ENCODE measurements at regions of chr16 and their contacts with region 1.

Region 1: GRCh38 chr16:89602273-89602951 is 11.0 kb upstream of the DPEP1 start:
- DNase-seq: peak; percentile 93
- H3K27ac ChIP-seq: peak overlapping the region; percentile 84
- CTCF ChIP-seq: no peak

Region 2: DNA sequence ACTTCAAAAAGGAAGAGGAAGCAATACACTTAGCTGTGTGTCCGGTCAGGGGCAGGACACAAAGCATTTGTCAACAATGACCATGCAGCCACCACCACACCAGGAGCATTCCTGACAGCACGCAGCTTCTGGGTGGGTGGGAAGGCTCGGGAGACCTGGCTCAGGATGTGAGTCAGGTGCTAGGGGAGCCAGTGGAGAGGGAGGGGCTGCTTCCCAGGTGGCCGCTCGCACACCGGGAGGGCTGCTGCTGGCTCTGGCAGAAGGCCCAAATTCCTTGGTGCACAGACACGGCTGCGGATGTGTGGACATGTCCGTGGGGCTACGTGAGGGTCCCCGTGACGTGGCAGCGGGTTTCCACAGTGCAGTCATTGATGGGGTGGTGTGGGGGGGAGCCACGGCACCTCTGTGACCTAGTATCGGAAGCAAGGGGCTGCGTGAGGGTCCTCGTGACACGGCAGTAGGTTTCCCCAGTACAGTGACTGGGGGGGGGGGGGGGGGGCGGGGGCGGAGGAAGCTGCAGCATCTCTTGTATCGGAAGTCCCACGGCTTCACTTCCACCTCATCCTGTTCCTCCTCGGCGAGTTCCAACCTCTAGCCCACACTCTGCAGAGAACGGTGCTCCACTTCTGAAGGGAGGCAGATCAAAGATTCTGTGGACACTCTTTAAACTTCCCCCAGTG is 272.1 kb before region 1 on chr16:
- CTCF ChIA-PET with region 1: no interaction called
- POLR2A ChIA-PET with region 1: no interaction called
- DNase-seq: peak; percentile 90
- H3K27ac ChIP-seq: peak overlapping the region; percentile 82
- CTCF ChIP-seq: no peak

Region 3: DNA sequence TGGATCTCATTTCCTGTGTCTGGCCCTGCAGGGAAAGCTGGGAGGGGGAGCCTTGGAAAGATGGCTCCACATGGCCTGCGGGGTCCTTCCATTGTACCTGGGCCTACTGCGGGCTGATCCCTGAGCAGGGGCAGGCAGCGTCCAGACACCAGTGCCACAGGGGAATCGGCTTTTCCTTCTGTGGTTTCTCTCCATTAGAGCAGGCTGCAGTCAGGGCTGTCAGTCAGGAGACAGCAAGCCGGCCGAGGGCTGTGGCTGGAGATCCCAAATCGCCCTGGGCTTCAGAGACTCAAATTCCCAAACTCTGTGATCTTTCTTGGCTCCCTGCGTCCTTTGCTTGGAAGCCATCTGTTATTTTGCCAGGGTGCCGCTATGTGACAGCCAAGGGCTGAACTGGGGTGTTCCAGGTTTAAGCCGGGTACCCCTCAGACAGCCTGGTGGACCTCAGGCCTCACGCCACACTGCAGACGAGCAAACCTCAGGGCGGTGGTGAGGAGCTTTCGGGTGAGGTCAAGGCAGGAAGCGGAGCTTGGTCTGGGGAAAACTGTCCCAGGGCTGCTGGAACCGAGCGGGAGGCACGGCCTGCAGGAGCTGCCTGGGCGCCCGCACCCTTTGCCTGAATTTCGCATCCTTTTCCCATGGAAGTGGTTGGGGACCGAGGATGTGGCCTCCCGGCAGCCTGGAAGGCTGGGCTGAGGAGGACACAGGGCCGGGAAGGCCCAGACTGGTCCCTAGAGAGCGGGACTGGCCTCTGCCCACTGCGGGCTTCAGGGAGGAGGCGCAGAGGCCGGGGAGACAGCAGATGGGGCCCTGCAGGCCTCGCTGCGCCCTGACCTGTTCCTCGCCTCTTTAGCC is 28.4 kb before region 1 on chr16:
- CTCF ChIA-PET with region 1: no interaction called
- POLR2A ChIA-PET with region 1: no interaction called
- DNase-seq: no peak
- H3K27ac ChIP-seq: peak overlapping the region; percentile 8; the same call in 1 of the 2 replicates
- CTCF ChIP-seq: no peak

Region 4: GRCh38 chr16:89615596-89616090 is 13.2 kb after region 1 on chr16:
- CTCF ChIA-PET with region 1: interaction called, 10 read pairs
- POLR2A ChIA-PET with region 1: no interaction called
- DNase-seq: no peak
- H3K27ac ChIP-seq: no peak overlapping the region
- CTCF ChIP-seq: peak; percentile 61

Region 5: DNA sequence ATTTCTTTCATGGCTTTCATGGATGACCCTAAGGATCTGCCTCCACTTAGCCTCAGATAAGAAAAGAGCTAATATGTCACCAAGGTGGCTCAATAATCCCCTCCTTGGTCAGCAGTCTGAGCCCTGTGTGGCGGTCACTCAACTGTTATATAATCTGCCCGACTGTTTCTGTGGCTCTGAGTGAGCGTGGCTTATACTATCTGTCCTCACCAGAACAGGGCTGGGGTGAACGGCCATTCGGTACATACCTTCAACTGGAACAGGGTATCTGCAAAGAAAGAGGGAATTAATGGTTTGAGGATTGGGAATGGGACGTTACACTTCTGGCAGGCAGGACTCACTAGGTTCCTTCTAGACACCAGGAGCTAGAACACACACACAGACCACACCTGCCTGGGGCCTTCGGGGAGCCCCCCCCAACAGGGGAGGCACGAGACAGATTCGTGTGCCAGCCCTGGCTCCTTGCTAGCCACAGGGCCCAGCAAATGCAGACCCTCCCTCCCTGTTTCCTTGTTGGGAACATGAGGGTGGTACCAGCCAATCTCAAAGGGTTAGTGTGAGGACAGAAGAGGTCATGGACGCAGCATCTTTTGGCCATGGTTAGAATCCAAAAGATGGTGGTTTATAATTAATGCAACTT is 51.4 kb after region 1 on chr16:
- CTCF ChIA-PET with region 1: interaction called, 3 read pairs
- POLR2A ChIA-PET with region 1: interaction called, 11 read pairs
- DNase-seq: no peak
- H3K27ac ChIP-seq: no peak overlapping the region; the same call in 1 of the 2 replicates
- CTCF ChIP-seq: no peak